Heart left ventricle (tissue), 16 donors: ENCODE measurements at regions of chr22 and their contacts with region 1.

Region 1: GRCh38 chr22:43088979-43089717 is at the start of gene TTLL1:
- DNase-seq: peak; percentile 90 to 95 (median 93)
- ATAC-seq: peak; percentile 90 to 95 (median 93)
- H3K4me3 ChIP-seq: peak within 1 kb of the TSS; percentile 38 to 96 (median 84)
- H3K27ac ChIP-seq: peak within 1 kb of the TSS in 11 of 12 donors; percentile 47 to 77 (median 67)
- H3K4me1 ChIP-seq: peaks cover 0 to 30% (median 12%) of the 10 kb centered on the region in 12 donors
- H3K27me3 ChIP-seq: no peaks in the 10 kb centered on the region
- CTCF ChIP-seq: peak in 2 of 12 donors; percentile 14 to 15
- POLR2A ChIP-seq: peak in 1 of 2 donors; percentile 42
- total RNA-seq, gene TTLL1: 4.4 to 13.2 (median 8.4) TPM

Region 2: DNA sequence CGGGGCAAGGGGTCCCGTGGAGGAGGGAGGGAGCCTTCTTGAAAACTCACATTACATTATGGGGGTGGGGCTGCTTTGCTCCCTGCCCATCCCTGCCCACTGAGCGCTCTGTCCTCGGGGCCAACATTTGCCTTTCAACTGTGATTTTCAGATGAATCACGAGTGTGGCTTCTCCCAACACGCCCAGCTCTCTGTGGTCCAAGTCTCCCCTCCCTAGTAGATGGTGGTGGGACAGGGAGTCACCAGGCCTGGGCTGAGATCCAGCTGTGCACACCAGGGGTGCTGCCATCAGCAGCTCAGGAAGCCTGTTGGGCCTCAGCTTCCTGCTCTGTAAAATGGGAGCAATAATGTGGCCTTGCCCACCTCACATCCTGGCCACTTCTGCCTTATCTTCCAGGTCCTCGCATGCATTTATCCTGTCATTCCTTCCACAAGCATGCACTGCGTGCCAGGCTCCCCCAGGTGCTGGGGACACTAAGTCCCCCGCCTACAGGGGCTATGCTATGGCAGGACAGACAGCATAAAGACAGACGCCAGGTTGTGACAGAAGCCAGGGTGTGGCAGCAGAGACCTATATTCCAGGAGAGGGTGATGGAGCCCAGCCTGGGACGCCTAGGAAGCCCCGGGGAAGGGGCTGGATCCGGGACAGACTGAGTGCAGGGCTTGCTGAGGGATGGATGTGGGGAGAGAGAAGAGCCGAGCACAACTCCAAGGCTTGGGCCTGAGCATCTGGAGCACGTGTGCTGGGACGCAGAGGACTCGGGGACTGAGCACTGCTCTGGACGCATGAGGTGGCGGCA is 687.4 kb before region 1 on chr22:
- intact Hi-C with region 1: no loop called
- DNase-seq: no peak
- ATAC-seq: no peak
- H3K4me3 ChIP-seq: no peak overlapping the region
- H3K27ac ChIP-seq: no peak overlapping the region
- H3K4me1 ChIP-seq: peaks cover 0 to 11% (median 0%) of the 10 kb centered on the region in 12 donors
- H3K27me3 ChIP-seq: peaks cover 0 to 10% (median 0%) of the 10 kb centered on the region in 9 donors
- CTCF ChIP-seq: no peak
- POLR2A ChIP-seq: no peak

Region 3: DNA sequence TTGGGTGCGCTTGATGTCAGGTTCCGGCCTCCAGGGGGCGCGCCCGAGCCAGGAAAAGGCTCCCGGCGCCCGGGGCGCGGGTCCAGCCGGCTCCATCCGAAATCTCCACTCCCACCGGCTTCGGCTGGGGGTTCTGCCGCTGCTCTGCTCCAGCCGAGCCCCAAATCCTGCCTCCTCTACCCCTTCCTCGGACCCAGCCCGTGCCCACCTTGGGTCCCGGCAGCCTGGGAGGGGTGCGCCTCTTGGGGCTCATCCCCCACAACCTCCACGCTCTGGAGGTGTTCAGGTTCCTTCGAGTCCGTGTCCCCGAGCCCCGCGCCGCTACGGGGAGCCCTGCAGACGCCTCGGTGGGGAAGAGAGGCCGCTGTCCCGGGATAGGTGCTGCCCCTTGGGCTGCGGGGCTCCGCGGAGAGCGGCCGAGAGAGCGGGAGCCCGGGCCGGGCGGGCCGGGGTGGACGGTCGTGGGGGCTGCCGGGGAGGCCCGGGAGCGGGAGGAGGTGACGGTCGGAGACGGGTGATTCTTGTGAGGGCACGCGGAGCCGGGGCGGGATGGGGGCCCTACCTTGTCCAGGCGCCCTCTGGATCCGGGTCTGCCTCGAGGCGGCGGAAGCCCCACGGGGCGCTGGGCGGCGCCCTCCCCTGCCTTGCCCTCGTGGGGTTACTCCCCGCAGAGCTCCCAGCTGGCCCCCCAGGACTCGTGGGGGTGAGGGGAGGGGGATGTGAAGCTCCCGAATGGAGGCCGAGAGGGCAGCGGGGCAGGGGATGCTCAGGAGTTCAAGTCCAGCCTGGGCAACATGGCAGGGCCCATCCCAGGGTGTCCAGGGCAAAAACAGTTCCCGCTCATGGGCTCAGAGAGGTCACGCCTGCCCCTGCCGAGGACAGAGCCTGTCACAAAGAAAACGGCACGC is 426.8 kb before region 1 on chr22:
- intact Hi-C with region 1: loop called in 1 of 10 experiments (anchors 5 kb)
- DNase-seq: peak; percentile 81 to 92 (median 84)
- ATAC-seq: peak; percentile 60 to 95 (median 92)
- H3K4me3 ChIP-seq: peak overlapping the region; percentile 26 to 75 (median 57)
- H3K27ac ChIP-seq: peak overlapping the region in 11 of 12 donors; percentile 22 to 76 (median 58)
- H3K4me1 ChIP-seq: peaks cover 0 to 16% (median 11%) of the 10 kb centered on the region in 12 donors
- H3K27me3 ChIP-seq: peaks cover 0 to 9% (median 0%) of the 10 kb centered on the region in 9 donors
- CTCF ChIP-seq: peak in 11 of 12 donors; percentile 77 to 93 (median 84)
- POLR2A ChIP-seq: no peak

Region 4: GRCh38 chr22:42780070-42780540 is 309.0 kb before region 1 on chr22:
- intact Hi-C with region 1: loop called in 1 of 10 experiments (anchors 2 kb)
- DNase-seq: peak in 2 of 5 donors; percentile 61 to 77
- ATAC-seq: peak; percentile 54 to 88 (median 88)
- H3K4me3 ChIP-seq: no peak overlapping the region
- H3K27ac ChIP-seq: peak overlapping the region in 2 of 12 donors; percentile 46 to 52
- H3K4me1 ChIP-seq: peaks cover 0 to 9% (median 3%) of the 10 kb centered on the region in 12 donors
- H3K27me3 ChIP-seq: no peaks in the 10 kb centered on the region
- CTCF ChIP-seq: peak; percentile 80 to 93 (median 87)
- POLR2A ChIP-seq: no peak

Region 5: DNA sequence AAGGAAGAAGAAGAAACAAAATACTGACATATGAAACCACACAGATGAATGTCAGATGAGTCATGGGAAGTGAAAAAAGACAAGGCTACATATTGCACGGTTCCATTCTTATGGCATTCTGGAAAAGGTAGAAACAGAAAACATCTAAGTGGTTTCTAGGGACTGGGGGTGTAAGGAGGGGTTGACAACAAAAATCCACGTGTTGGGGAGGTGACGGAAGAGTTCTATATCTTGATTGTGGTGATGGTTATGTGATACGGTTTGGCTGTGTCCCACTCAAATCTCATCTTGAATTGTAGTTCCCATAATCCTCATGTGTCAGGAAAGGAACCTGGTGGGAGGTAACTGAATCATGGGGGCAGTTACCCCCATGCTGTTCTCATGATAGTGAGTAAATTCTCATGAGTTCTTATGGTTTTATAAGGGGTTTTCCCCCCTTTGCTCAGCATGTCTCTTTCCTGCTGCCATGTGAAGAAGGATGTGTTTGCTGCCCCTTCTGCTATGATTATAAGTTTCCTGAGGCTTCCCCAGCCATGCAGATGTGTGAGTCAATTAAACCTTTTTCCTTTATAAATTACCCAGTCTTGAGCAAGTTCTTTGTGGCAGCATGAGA is 225.7 kb before region 1 on chr22:
- intact Hi-C with region 1: loop called in 4 of 10 experiments (anchors 2 to 10 kb)
- DNase-seq: no peak
- ATAC-seq: no peak
- H3K4me3 ChIP-seq: no peak overlapping the region
- H3K27ac ChIP-seq: no peak overlapping the region
- H3K4me1 ChIP-seq: peaks cover 0 to 18% (median 4%) of the 10 kb centered on the region in 12 donors
- H3K27me3 ChIP-seq: no peaks in the 10 kb centered on the region
- CTCF ChIP-seq: no peak
- POLR2A ChIP-seq: no peak

Region 6: DNA sequence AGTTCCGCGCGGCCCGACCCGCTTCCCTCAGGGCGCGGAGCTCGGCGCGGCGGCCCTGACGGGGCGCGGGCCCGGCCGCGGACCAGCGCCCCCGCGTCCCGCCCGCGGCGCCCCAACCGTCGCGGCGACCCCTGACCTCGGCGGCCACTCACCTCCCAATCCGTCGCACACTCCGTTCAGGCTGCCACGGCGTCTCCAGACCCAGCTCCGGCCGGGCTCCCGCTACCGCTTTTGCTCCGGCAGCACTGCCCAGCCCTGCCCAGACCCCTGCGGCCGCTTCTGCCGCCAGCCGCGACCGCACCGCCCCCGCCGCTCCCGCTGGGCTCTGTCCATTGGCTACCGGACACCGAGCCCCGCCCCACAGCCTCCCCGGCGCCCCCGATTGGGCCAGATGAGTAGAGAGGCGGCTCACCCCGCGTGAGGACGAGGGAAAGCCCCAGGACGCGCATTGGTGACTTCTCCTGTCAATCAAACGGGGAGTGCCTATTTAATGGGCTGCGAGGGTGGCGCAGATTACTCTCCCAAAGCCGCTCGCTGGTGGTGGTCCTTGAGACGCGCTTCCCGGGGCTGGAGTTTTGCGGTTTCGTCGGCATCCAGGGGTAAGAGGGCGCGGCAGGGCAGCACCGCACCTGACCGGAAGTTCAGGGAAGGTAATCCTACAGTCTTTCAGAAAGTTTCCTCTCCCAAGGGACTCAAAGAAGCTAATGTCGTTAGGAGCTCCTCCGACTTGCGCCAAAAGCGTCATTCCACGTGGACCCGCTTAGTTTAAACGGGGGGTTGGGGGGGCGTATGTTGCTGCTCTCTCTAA is 74.1 kb before region 1 on chr22 and contains the start of gene PACSIN2:
- intact Hi-C with region 1: loop called in 1 of 10 experiments (anchors 10 kb)
- DNase-seq: peak; percentile 100
- ATAC-seq: peak; percentile 99 to 100 (median 100)
- H3K4me3 ChIP-seq: peak within 1 kb of the TSS; percentile 65 to 97 (median 79)
- H3K27ac ChIP-seq: peak within 1 kb of the TSS; percentile 26 to 82 (median 68)
- H3K4me1 ChIP-seq: peaks cover 0 to 37% (median 11%) of the 10 kb centered on the region in 12 donors
- H3K27me3 ChIP-seq: no peaks in the 10 kb centered on the region
- CTCF ChIP-seq: no peak
- POLR2A ChIP-seq: peak; percentile 79 to 97
- total RNA-seq, gene PACSIN2: 42.5 to 87.1 (median 59.3) TPM